GM10248 (cell line): ENCODE measurements at regions of chr11 and their contacts with region 1.

Region 1: DNA sequence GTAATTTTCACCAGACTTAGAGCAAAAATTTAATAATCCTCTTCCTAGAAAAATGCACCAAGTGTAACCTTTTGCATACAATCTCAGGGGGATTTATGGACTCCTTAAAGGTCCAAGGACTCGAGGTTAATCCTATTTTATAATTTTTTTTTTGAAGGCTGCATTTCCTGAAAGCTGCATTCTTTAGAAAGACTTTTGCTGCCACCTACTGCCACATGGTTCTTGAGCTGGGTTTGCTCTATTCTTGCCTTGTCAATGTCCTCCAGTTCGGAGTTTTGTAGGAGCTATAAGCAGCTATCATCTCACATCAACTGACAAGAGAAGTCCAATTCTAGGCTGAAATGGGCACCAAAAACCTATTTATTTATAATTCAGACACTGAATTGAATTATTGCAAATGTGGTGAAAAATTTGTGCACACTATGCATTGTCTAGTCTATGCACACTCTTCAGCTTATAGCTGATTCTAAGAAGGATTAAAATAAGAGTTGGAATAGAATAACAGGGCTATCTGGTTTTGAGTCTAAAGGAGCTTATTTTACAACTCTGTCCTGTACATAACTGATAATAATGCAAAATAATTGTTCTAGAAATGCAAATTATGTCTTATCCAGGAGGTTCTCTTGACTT is 31.3 kb downstream of the TRAF6 start:
- DNase-seq: no peak
- CTCF ChIP-seq: peak; percentile 65

Region 2: GRCh38 chr11:35404388-35404775 is 1074.4 kb before region 1 on chr11:
- CTCF ChIA-PET with region 1: no interaction called
- POLR2A ChIA-PET with region 1: no interaction called
- DNase-seq: no peak
- CTCF ChIP-seq: peak; percentile 42

Region 3: DNA sequence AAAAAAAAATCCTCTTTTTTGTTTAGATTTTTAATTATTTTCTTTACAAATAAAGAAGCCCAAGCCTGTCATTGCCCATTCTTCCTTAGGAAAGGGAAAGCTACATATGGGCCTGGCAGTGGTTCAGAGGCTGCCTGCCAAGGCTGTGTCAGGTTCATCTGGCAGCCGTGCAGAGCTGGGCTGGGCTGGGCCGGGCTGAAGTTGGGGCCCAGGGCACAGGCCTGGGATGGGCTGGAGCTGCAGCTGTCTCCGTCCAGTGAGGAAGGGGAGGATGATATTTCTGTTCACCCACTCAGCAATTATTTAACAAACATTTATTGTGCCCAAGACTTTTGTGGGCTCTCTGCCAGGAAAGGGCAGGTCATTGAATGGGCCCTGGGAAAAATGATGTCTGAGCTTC is 178.2 kb before region 1 on chr11:
- CTCF ChIA-PET with region 1: interaction called, 156 read pairs
- POLR2A ChIA-PET with region 1: no interaction called
- DNase-seq: no peak
- CTCF ChIP-seq: no peak

Region 4: GRCh38 chr11:36306888-36307287 is 171.9 kb before region 1 on chr11:
- CTCF ChIA-PET with region 1: interaction called, 12 read pairs
- POLR2A ChIA-PET with region 1: no interaction called
- DNase-seq: no peak
- CTCF ChIP-seq: peak; percentile 22

Region 5: DNA sequence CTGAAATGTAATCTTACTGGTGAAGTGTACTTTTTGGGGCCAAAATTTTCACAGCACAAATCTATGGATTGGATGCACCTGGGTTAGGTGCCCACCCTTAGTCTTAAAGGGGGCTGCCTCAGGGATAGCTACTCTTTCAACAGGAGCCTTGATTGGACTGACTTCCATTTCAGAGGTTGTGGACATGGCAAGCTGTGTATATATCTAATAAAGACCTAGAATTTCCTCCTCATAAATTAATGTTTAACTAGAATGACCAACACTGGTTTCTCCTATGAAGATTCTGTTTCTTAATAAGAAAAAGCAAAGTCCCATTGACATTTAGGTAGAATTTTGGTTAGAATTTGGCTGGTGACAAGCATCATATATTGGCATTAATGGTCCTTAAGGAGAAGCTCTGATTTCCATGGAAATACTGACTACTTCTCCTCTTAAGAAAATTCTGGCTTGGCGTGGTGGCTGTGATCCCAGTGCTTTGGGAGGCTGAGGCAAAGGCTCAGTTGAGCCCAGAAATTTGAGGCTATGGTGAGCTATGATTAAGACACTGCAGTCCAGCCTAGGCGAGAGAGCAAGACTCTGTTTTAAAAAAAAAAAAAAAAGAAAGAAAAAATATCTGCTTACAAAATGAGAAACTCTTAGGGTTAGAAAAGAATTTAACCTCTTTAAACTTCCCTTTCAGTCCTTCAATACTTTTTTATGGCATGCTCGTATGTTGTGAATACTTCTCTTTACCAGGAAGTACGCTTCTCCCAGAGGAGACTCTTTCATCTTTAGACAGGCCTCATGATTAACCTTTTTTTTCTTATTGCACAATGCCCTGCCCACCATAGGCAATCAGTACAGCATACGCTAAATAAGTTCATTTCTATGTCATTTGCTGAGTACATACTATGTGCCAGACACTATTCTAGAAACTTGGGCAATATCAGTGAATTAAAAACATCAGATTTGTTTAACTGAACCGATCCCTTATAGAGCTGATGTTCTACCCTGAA is 105.5 kb before region 1 on chr11:
- CTCF ChIA-PET with region 1: no interaction called
- POLR2A ChIA-PET with region 1: no interaction called
- DNase-seq: no peak
- CTCF ChIP-seq: no peak

Region 6: DNA sequence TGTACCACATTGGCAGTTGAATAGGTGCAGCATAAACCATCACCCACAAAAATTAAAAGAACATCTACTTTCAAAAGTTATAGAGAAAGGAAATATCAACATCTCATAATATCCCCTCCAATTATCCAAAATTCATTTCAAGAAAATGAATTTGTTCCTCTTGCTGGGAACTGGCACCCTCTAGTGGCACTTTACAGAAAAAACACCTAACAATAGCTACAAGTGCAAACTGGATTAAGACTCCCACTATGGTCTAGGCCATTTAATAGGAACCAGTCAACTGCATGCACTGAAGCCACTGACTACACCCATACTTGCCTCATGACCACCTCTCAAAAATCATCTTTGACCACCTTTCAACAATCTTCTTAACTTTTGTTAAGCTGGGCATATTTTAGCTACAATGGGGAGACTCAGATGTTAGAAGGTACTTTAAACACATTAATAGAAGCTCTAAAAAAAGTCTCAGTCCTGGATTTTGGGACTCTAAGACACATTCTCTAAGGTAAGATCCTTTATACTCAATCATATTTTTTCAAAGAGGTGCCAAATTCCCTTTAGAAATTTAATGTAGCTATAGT is 14.0 kb after region 1 on chr11:
- CTCF ChIA-PET with region 1: interaction called, 48 read pairs
- POLR2A ChIA-PET with region 1: no interaction called
- DNase-seq: peak; percentile 45
- CTCF ChIP-seq: peak; percentile 69

Region 7: GRCh38 chr11:36500315-36500721 is 21.5 kb after region 1 on chr11:
- CTCF ChIA-PET with region 1: interaction called, 22 read pairs
- POLR2A ChIA-PET with region 1: no interaction called
- DNase-seq: peak; percentile 53
- CTCF ChIP-seq: no peak